BJ (cell line): ENCODE measurements at regions of chr22 and their contacts with region 1.

Region 1: GRCh38 chr22:35350539-35351503 is 30.1 kb upstream of the HMOX1 start:
- DNase-seq: peak; percentile 49
- H3K4me3 ChIP-seq: peak overlapping the region; percentile 53
- H3K27me3 ChIP-seq: no peaks in the 10 kb centered on the region
- CTCF ChIP-seq: peak; percentile 86

Region 2: GRCh38 chr22:35072925-35073324 is 277.9 kb before region 1 on chr22:
- CTCF ChIA-PET with region 1: no interaction called
- POLR2A ChIA-PET with region 1: no interaction called
- DNase-seq: no peak
- H3K4me3 ChIP-seq: no peak overlapping the region
- H3K27me3 ChIP-seq: no peaks in the 10 kb centered on the region
- CTCF ChIP-seq: no peak

Region 3: DNA sequence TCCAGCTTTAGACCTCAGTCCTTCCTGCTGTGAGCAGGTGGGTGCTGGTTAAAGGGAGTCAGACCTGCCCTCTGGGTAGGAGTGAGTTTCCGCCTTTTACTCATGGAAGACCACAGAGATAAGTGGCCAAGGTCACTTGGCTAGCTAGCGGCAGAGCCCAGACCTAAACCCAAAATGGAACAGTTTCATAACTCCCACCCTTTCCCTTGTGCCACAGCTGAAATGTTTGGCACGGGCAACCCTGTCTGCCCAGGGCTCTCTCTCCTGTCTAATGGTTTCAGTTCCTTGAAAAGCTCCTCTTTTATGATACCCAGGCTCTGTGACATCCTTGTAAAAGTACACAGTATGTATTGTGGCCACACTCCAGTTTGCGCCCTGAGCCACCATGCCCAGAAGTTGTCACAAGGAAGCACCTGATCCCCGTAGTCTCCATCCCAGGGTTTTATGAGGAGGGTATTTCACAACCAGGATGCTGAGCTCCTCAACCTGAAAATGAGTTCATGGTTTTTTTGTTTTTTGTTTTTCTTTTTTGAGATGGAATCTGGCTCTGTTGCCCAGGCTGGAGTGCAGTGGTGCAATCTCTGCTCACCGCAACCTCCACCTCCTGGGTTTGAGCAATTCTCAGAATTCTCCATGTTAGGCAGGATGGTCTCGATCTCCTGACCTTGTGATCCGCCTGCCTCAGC is 261.2 kb after region 1 on chr22:
- CTCF ChIA-PET with region 1: interaction called, 14 read pairs
- POLR2A ChIA-PET with region 1: no interaction called
- DNase-seq: no peak
- H3K4me3 ChIP-seq: no peak overlapping the region
- H3K27me3 ChIP-seq: peaks cover 17% of the 10 kb centered on the region
- CTCF ChIP-seq: no peak

Region 4: DNA sequence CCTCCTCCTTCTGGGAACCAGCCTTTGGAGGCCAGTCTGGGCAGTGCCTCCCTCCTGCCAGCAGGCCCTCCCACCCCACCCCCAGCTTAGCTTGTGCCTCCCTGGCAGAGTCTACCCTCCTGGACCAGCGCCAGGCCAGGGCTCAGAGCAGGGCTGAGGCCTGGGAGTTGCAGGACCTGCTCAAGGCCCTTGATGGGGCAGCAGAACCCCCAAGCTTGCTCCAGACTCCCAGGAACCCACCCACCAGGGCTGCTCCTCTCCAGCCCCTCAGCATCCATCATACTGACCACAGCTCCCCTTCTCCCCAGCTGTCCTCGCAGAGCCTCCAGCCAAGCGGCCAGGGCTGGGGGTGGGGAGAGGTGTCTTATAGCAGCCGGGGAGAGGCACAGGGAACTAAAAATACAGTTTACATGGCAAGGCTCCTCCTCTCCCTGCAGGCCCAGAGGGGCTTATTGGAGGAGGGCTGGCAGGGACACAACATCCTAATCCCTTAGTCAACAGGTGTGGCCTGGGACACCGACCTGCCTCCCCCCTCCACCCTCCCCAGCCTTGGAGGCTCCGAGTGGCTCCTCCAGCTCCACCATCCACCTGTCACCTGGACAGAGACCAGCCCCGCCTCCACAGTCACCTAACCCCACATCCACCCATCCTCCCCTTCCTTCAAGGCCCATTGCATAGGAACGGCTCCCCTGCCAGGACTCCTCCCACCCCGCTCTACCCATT is 271.5 kb after region 1 on chr22:
- CTCF ChIA-PET with region 1: interaction called, 15 read pairs
- POLR2A ChIA-PET with region 1: no interaction called
- DNase-seq: no peak
- H3K4me3 ChIP-seq: no peak overlapping the region
- H3K27me3 ChIP-seq: no peaks in the 10 kb centered on the region
- CTCF ChIP-seq: no peak